Posterior vena cava (tissue), 2 donors: ENCODE measurements at regions of chr13 and their contacts with region 1.

Region 1: DNA sequence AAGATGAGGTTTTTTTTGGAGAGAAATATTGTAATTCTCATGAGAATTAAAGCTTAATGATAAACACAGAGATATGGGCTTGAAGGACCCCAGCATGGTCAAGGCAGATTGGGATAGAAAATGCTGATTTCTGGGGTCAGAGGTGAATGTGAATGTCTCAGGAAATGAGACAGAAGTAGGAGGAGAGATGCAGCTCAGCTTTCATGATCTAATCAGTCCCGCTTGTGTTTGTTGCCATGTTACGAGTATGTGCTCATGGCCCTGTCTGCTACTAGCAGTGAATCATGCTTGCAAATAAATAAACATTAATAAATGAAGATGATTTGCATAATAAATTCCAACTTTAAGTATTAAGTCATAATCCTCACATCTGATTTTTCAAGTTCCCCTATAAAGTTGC is 23.0 kb upstream of the NDFIP2 start:
- DNase-seq: no peak

Region 2: DNA sequence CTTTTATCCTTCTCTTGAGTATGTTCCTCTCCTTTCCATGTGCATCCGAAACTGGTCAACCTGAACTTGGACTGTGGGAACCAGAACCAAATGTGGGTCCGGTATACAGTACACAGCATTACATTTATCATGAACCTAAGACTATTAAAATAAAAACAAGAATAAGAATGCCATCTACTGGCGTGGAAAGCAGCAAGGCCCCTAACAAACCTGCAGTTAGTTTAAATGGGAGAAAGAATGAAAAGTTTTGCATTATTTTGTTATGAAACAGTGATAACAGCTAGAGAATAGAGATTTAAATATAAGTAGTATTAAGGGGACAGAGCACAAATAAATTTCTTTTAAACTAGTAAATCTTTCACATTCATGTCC is 211.4 kb before region 1 on chr13:
- intact Hi-C with region 1: loop called in 1 of 2 experiments (anchors 5 kb)
- DNase-seq: no peak